Breast epithelium (tissue), 4 donors: ENCODE measurements at regions of chr6 and their contacts with region 1.

Region 1: DNA sequence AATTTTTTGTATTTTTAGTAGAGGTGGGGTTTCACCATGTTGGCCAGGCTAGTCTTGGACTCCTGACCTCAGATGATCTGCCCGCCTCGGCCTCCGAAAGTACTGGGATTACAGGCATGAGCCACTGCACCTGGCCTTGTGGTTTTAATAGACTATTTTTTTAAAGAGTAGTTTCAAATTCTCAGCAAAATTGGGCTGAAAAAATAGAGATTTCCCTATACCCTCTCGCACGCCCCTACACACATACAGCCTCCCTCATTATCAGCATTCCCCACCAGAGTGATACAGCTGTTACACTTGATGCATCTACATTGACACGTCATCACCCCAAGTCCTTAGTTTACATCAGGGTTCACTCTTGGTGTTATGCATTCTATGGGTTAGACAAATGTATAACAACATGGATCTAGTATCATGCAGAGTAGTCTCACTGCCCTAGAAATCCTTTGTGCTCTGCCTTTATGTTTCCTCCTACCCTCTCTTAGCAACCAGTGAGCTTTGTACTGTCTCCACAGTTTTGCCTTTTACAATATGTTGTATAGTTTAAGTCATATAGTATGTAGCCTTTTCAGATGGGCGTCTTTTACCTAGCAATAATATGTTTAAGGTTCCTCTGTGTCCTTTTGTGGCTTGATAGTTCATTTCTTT is 103.6 kb downstream of the CDYL start:
- DNase-seq: no peak
- H3K4me3 ChIP-seq: no peak overlapping the region
- H3K27ac ChIP-seq: no peak overlapping the region
- H3K4me1 ChIP-seq: no peaks in the 10 kb centered on the region
- H3K27me3 ChIP-seq: no peaks in the 10 kb centered on the region
- CTCF ChIP-seq: no peak
- POLR2A ChIP-seq: no peak

Region 2: DNA sequence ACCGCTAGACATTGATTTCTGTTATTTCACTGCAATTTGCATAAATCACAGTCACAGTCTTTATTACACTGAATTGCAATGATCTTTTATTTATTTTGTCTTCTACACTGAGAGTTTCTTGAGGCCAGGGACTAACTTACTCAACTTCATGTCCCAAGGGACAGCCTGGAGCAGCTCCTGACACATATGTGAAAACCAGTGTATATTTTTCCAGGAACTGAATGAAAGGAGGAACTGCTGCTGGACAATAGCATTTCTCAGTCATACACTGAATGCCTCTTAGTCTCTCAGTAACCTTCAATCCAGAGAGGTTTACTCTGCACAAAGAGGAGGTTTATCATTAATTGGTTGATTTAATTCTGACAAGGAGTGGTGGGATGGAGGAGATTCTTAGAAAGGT is 1434.7 kb after region 1 on chr6:
- intact Hi-C with region 1: no loop called
- DNase-seq: no peak
- H3K4me3 ChIP-seq: no peak overlapping the region
- H3K27ac ChIP-seq: no peak overlapping the region
- H3K4me1 ChIP-seq: no peaks in the 10 kb centered on the region
- H3K27me3 ChIP-seq: peaks cover 0 to 16% of the 10 kb centered on the region in 2 donors
- CTCF ChIP-seq: no peak
- POLR2A ChIP-seq: no peak

Region 3: DNA sequence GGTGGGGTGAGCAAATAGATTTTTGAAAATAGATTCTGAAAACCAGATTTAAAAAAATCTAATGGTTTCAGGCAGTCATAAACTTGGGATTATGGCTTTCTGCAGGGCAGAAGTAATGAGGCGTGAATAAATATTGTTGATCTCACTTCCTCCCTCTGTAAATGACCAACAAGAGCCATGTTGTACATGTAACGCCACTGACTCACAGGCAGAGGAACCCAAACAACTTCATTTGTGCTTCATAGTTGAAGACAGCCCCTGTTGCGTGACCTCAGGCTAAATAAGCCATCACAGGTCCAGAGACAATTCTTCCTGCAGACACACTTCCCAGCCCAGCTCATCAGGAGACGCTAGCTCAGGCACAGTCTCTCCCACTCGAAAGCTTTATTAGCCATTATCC is 1499.7 kb after region 1 on chr6:
- intact Hi-C with region 1: loop called (anchors 5 kb)
- DNase-seq: no peak
- H3K4me3 ChIP-seq: no peak overlapping the region
- H3K27ac ChIP-seq: no peak overlapping the region
- H3K4me1 ChIP-seq: no peaks in the 10 kb centered on the region
- H3K27me3 ChIP-seq: no peaks in the 10 kb centered on the region
- CTCF ChIP-seq: no peak
- POLR2A ChIP-seq: no peak